Right ventricle myocardium inferior (tissue), 1 donor: ENCODE measurements at regions of chr2 and their contacts with region 1.

Region 1: GRCh38 chr2:27798948-27799645 is 27.6 kb downstream of the MRPL33 start:
- DNase-seq: no peak
- ATAC-seq: peak; percentile 15

Region 2: GRCh38 chr2:27715318-27716210 is 83.5 kb before region 1 on chr2:
- intact Hi-C with region 1: loop called (anchors 5 kb)
- DNase-seq: no peak
- ATAC-seq: peak; percentile 88

Region 3: DNA sequence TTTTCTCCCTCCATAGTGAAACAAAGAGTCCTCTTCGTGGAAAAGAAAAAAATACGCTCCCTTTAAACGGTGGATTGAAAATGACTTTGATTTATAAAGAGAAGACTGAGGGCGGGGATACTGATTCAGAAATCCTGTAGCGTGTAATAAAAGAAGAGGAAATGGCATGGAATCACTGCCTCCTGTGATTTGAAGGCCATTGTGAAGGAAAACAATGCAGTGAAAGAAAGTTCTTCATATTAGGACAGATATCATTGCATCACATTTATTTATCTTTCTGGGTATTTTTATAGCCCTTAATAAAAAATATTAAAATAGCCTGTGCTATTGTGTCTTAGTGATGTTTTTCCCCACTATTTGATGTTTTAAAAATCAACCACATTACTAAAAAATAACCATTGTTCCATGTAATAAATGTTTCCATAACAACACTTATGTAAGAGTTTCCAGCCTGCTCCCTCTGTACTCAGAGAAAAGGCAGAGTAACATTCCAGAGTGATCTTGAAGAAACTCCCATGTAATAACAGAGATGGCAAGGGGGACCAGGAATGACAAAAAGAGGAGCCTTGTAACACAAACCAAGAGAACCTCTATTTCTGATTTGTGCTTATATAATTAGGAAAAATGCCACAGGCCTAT is 19.6 kb before region 1 on chr2:
- intact Hi-C with region 1: loop called (anchors 2 kb)
- DNase-seq: no peak
- ATAC-seq: no peak

Region 4: GRCh38 chr2:28108143-28108542 is 309.0 kb after region 1 on chr2:
- intact Hi-C with region 1: no loop called
- DNase-seq: no peak
- ATAC-seq: no peak